ENCODE measurements at regions of chr6 and their contacts with region 1.

Region 1: GRCh38 chr6:5522147-5522546 is 260.8 kb downstream of the FARS2 start:
- DNase-seq: no peak

Region 2: DNA sequence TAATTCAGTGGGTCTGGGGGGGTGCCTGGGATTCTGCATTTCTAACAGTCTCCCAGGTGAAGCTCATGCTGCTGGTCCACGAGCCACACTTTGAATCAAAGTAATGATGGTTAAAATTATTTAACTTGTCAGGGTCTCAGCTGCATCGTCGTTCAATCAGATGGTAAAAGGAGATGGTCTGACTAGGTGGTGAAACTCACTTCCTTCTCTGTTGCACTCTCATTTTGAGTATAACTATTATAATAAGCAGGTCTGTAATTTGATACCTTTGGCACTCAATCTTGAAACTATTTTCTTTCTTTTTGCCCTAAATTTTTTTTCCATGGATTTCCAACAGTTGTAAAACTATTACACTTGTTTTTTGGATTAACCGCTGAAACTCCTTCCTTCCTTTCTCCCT is 31.6 kb after region 1 on chr6:
- intact Hi-C with region 1: no loop called
- DNase-seq: no peak

Region 3: GRCh38 chr6:5569491-5569890 is 47.3 kb after region 1 on chr6:
- intact Hi-C with region 1: loop called in 1 of 2 experiments (anchors 2 kb)
- DNase-seq: no peak